IMR-90 (cell line): ENCODE measurements at regions of chr5 and their contacts with region 1.

Region 1: DNA sequence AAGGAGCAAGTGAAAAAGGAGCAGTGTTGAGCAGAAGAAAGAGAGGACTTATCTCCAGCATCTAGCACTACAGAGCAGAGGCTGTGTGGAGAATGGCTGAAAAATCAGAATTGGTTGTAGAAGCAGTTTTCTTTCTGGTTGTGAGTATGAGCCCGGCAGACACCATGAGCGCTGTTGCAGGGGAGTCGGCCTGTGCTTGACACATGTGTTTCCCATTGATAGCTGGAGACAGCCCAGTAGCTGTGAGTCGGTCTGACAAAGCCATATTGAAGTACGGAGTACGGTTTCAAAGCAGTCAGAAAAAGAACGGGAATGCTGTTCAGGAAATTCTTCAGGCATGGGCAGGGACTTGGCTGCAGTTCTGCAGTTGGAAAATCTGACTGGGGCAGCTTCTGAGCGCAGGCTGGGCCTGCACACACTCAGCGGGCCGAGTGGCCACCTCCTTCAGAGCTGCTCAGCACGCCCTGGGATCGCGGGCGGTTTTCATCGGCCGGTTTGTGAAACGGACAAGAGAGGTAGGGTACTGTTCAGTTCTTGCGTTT is at the start of gene SGCD:
- DNase-seq: peak; percentile 90
- ATAC-seq: peak; percentile 94
- H3K4me3 ChIP-seq: peak within 1 kb of the TSS; percentile 72
- H3K27ac ChIP-seq: peak within 1 kb of the TSS; percentile 89
- H3K4me1 ChIP-seq: peaks cover 10% of the 10 kb centered on the region
- H3K27me3 ChIP-seq: no peaks in the 10 kb centered on the region
- CTCF ChIP-seq: no peak
- POLR2A ChIP-seq: peak; percentile 56
- RAD21 ChIP-seq: peak; percentile 33; the same call in 1 of the 2 replicates
- total RNA-seq, gene SGCD: 10.6 TPM in 2 replicates

Region 2: GRCh38 chr5:155728146-155728856 is 598.5 kb before region 1 on chr5:
- CTCF ChIA-PET with region 1: no interaction called
- POLR2A ChIA-PET with region 1: no interaction called
- dilution Hi-C with region 1: no loop called
- in situ Hi-C with region 1: no loop called
- intact Hi-C with region 1: loop called (anchors 10 kb)
- DNase-seq: peak; percentile 16
- ATAC-seq: peak; percentile 87
- H3K4me3 ChIP-seq: peak overlapping the region; percentile 37
- H3K27ac ChIP-seq: no peak overlapping the region
- H3K4me1 ChIP-seq: no peaks in the 10 kb centered on the region
- H3K27me3 ChIP-seq: peaks cover 27% of the 10 kb centered on the region
- CTCF ChIP-seq: no peak
- POLR2A ChIP-seq: no peak
- RAD21 ChIP-seq: no peak

Region 3: DNA sequence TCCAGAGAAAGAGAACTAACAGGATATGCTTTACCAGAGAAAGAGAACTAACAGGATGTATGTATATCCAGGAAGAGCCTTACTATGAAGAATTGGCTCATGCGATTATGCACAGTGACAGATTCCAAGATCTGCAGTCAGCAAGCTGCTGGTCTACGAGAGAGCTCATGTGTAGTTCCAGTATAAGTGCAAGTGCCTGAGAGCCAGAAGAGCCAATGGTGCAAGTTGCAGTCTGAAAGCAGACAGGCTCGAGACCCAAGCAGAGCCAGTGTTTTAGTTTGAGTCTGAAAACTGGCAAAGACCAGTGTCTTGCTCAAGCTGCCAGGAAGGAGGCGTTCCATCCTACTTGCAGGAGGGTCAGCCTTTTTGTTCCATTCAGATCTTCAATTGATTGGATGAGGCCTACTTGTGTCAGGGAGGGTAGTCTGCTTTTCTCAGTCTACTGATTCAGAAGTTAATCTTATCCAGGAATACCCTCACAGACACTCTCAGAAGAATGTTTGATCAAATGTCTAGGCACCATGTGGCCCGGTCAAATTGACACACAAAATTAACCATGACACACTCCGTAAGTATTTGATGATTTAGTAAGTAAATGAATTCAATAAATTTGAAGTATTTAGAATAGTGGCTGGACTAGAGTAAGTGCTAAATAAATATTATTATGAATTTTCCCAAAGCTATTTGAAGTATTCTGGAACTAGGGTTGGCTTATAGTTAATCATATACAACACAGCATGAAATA is 371.9 kb before region 1 on chr5:
- CTCF ChIA-PET with region 1: no interaction called
- POLR2A ChIA-PET with region 1: interaction called, 6 read pairs
- dilution Hi-C with region 1: no loop called
- in situ Hi-C with region 1: loop called (anchors 10 kb)
- intact Hi-C with region 1: no loop called
- DNase-seq: peak; percentile 77
- ATAC-seq: peak; percentile 79
- H3K4me3 ChIP-seq: no peak overlapping the region
- H3K27ac ChIP-seq: peak overlapping the region; percentile 95
- H3K4me1 ChIP-seq: peaks cover 10% of the 10 kb centered on the region; the same call in 1 of the 2 replicates
- H3K27me3 ChIP-seq: no peaks in the 10 kb centered on the region
- CTCF ChIP-seq: no peak
- POLR2A ChIP-seq: no peak
- RAD21 ChIP-seq: 0 out of 2 replicates have a peak, but pooled peaks have one; percentile 11

Region 4: GRCh38 chr5:156147251-156147947 is 179.4 kb before region 1 on chr5:
- CTCF ChIA-PET with region 1: no interaction called
- POLR2A ChIA-PET with region 1: interaction called, 3 read pairs
- dilution Hi-C with region 1: no loop called
- in situ Hi-C with region 1: no loop called
- intact Hi-C with region 1: loop called (anchors 5 kb)
- DNase-seq: peak; percentile 87
- ATAC-seq: peak; percentile 79
- H3K4me3 ChIP-seq: no peak overlapping the region
- H3K27ac ChIP-seq: peak overlapping the region; percentile 86; the same call in 1 of the 2 replicates
- H3K4me1 ChIP-seq: peaks cover 11% of the 10 kb centered on the region
- H3K27me3 ChIP-seq: no peaks in the 10 kb centered on the region
- CTCF ChIP-seq: no peak
- POLR2A ChIP-seq: no peak
- RAD21 ChIP-seq: no peak

Region 5: GRCh38 chr5:156515803-156516360 is 189.1 kb after region 1 on chr5:
- CTCF ChIA-PET with region 1: no interaction called
- POLR2A ChIA-PET with region 1: no interaction called
- dilution Hi-C with region 1: no loop called
- in situ Hi-C with region 1: no loop called
- intact Hi-C with region 1: loop called (anchors 5 kb)
- DNase-seq: peak; percentile 28
- ATAC-seq: peak; percentile 36
- H3K4me3 ChIP-seq: no peak overlapping the region
- H3K27ac ChIP-seq: peak overlapping the region; percentile 93
- H3K4me1 ChIP-seq: peaks cover 15% of the 10 kb centered on the region
- H3K27me3 ChIP-seq: no peaks in the 10 kb centered on the region
- CTCF ChIP-seq: no peak
- POLR2A ChIP-seq: no peak
- RAD21 ChIP-seq: no peak